ENCODE measurements at regions of chr9 and their contacts with region 1.

Region 1: DNA sequence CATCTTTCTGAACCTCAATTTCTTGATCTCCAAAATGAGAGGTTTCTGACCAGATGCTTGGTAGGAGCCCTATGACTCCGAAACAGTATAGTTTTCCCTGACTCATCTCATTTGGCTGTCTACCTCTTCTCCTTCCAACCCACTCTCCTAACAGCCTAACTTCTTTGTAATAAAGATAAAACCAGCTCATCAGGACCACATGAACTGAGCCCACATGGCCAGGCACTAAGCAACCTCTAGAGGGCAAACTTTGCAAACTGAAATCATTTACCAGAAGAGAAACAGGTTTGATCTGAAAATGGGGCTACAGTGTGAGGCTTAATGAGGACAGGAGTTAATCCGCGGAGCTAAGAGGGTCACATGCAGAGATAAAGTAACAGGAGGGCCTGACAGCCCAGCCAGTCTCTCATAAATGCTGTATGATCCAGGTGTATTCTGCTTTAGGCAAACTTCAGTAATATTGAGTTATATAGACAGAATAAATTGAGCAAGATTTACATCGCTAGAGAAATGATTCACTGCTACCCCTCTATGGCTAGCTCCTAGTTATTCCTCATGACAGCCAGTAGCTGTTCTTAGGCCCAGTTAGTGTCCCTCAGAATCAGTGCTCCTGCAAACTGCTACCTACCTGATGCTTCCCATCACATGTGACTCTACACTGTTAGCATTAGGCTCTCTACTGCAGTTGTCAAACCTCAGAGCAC is 64.6 kb downstream of the ABCA1 start:
- DNase-seq: peak; percentile 71
- ATAC-seq: peak; percentile 72
- H3K4me3 ChIP-seq: no peak overlapping the region
- H3K4me3 Mint-ChIP-seq: no peak overlapping the region
- H3K27ac ChIP-seq: no peak overlapping the region
- H3K27ac Mint-ChIP-seq: peak overlapping the region; percentile 1
- H3K4me1 ChIP-seq: peaks cover 27 to 51% of the 10 kb centered on the region in 2 donors
- H3K4me1 Mint-ChIP-seq: peaks cover 50% of the 10 kb centered on the region
- H3K27me3 ChIP-seq: no peaks in the 10 kb centered on the region
- H3K27me3 Mint-ChIP-seq: no peaks in the 10 kb centered on the region
- CTCF ChIP-seq: peak; percentile 82

Region 2: DNA sequence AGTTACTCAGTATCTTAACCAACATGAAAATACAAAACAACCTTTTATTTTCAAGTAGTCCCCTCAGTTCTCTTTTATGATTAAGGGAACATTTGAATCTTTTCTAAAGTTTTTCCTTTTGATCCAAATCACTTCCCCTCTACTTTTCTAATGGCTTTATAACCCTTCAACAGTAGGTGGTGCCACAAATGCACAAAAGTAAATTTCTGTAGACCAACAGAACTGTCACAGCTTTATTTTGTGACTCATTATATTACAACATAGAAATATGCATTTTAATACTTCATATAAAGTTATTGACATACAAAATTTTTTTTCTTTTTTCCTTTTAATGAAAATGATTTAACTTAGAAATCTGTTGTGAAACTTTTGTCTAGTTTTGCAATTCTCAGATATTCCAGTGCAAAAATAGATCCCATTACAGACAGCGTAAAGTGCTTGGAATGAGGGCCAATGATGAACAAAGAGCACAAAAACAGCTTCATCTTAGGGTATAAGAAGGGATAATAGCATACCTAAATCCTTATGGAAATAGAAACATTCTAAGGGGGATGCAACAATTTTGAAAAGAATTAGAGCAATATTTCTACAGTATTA is 82.4 kb before region 1 on chr9:
- CTCF ChIA-PET with region 1: interaction called, 8 read pairs
- POLR2A ChIA-PET with region 1: no interaction called
- intact Hi-C with region 1: loop called (anchors 5 kb)
- DNase-seq: peak; percentile 30
- ATAC-seq: no peak
- H3K4me3 ChIP-seq: no peak overlapping the region
- H3K4me3 Mint-ChIP-seq: no peak overlapping the region
- H3K27ac ChIP-seq: no peak overlapping the region
- H3K27ac Mint-ChIP-seq: peak overlapping the region; percentile 7
- H3K4me1 ChIP-seq: peaks cover 26 to 43% of the 10 kb centered on the region in 2 donors
- H3K4me1 Mint-ChIP-seq: peaks cover 35% of the 10 kb centered on the region
- H3K27me3 ChIP-seq: no peaks in the 10 kb centered on the region
- H3K27me3 Mint-ChIP-seq: no peaks in the 10 kb centered on the region
- CTCF ChIP-seq: peak; percentile 69

Region 3: DNA sequence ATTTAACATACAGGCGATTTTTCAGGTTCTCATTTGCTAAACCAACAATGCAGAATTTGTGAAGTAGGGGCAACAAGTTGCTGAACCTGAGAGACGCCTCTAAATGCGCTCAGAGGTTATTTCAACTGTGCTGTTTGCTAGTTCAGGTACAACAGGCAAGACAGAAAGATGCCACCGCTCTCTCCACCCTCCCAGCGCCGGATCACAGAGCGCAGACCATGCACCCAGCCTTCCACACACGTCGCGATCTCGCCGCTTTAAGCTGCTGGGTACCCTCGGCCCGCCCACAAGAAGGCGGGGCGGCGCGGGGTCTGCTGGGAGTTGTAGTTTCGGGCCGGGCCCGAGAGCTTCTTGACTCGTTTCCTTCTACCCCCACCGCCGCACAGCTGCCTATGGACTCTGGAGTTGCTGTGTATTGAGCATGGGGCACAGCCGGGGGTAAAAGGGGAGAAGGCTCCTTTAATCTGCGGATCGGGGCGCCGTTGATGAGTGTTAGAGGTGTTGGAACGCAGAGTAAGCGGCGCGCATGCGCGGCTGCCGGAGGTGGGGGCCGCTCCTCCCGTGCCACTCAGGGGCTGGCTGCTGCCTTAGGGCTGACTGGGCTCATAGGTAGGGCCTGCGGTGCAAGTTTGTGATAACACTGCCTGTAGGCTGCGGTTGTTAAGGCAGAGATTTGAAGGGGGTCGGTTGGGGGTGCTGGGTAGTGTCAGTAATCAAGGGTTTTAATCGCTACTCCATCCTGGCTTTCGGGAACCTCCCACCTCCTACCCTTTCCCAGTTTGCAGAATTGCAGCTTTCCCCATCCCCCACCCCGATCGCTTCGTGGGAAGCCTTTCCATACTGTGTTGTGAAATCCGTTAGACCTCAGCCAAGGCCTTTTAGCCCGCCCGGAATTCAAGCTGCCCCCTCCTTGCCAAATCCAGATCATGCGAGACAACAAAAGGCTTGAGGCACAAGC is 105.0 kb after region 1 on chr9:
- CTCF ChIA-PET with region 1: interaction called, 5 read pairs
- POLR2A ChIA-PET with region 1: no interaction called
- intact Hi-C with region 1: loop called (anchors 1 kb)
- DNase-seq: peak; percentile 92
- ATAC-seq: peak; percentile 99
- H3K4me3 ChIP-seq: peak overlapping the region; percentile 68 to 86 (median 78)
- H3K4me3 Mint-ChIP-seq: peak overlapping the region; percentile 91
- H3K27ac ChIP-seq: no peak overlapping the region
- H3K27ac Mint-ChIP-seq: peak overlapping the region; percentile 71
- H3K4me1 ChIP-seq: peaks cover 4 to 14% of the 10 kb centered on the region in 2 donors
- H3K4me1 Mint-ChIP-seq: peaks cover 10% of the 10 kb centered on the region
- H3K27me3 ChIP-seq: peaks cover 0 to 4% (median 2%) of the 10 kb centered on the region in 4 experiments
- H3K27me3 Mint-ChIP-seq: peaks cover 21% of the 10 kb centered on the region
- CTCF ChIP-seq: no peak

Region 4: GRCh38 chr9:105157130-105157583 is 293.8 kb after region 1 on chr9:
- CTCF ChIA-PET with region 1: interaction called, 106 read pairs
- POLR2A ChIA-PET with region 1: no interaction called
- intact Hi-C with region 1: loop called (anchors 1 kb)
- DNase-seq: peak; percentile 59
- ATAC-seq: peak; percentile 63
- H3K4me3 ChIP-seq: no peak overlapping the region
- H3K4me3 Mint-ChIP-seq: no peak overlapping the region
- H3K27ac ChIP-seq: no peak overlapping the region
- H3K27ac Mint-ChIP-seq: no peak overlapping the region
- H3K4me1 ChIP-seq: no peaks in the 10 kb centered on the region
- H3K4me1 Mint-ChIP-seq: peaks cover 3% of the 10 kb centered on the region
- H3K27me3 ChIP-seq: no peaks in the 10 kb centered on the region
- H3K27me3 Mint-ChIP-seq: no peaks in the 10 kb centered on the region
- CTCF ChIP-seq: peak; percentile 56

Region 5: DNA sequence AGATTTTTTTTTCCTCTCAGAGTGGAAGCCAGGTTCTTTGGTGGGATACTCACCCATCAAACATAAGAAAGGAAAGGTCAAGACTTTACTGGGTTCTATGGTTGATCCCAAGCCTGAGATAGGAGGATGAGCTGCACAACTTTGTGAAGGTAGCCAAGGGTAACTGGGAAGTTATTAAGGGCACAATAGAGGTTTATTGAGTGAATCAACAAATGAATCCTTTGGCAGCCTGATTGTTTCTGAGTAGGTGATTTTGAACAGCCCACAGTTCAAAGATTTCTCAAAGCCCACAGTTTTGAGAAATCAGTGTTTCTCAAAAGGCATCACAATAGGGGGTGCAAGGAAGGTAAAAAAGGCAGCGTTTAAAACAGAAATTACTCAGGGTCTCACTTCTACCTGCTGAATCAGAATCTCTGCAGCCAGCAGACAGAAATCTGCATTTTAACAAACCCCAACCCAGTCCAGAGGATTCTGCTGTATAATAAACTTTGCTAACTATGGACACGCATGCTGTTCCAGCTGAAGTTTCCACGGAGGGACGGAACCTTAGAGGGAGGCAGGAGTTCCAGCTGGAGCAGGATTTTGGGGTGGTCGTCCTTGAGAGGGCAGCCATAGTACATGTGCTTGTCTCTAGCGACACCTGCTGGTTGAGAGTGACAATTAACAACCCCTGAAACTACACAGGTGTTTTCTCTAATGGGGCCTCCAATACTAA is 551.8 kb after region 1 on chr9:
- CTCF ChIA-PET with region 1: interaction called, 79 read pairs
- POLR2A ChIA-PET with region 1: no interaction called
- intact Hi-C with region 1: loop called (anchors 1 kb)
- DNase-seq: peak; percentile 77
- ATAC-seq: peak; percentile 81
- H3K4me3 ChIP-seq: no peak overlapping the region
- H3K4me3 Mint-ChIP-seq: no peak overlapping the region
- H3K27ac ChIP-seq: no peak overlapping the region
- H3K27ac Mint-ChIP-seq: no peak overlapping the region
- H3K4me1 ChIP-seq: peaks cover 3 to 4% of the 10 kb centered on the region in 2 donors
- H3K4me1 Mint-ChIP-seq: peaks cover 4% of the 10 kb centered on the region
- H3K27me3 ChIP-seq: no peaks in the 10 kb centered on the region
- H3K27me3 Mint-ChIP-seq: no peaks in the 10 kb centered on the region
- CTCF ChIP-seq: peak; percentile 94

Measured in B cell (primary cell).